ENCODE measurements at regions of chr11 and their contacts with region 1.

Region 1: GRCh38 chr11:27209562-27210005 is 153.4 kb downstream of the CCDC34 start:
- DNase-seq: peak in 2 of 6 donors; percentile 48 to 55
- ATAC-seq: peak; percentile 50 to 85 (median 78)
- H3K4me3 ChIP-seq: no peak overlapping the region
- H3K27ac ChIP-seq: peak overlapping the region in 1 of 4 donors; percentile 32
- H3K4me1 ChIP-seq: peaks cover 6 to 27% (median 10%) of the 10 kb centered on the region in 3 donors
- H3K27me3 ChIP-seq: no peaks in the 10 kb centered on the region
- CTCF ChIP-seq: no peak

Region 2: DNA sequence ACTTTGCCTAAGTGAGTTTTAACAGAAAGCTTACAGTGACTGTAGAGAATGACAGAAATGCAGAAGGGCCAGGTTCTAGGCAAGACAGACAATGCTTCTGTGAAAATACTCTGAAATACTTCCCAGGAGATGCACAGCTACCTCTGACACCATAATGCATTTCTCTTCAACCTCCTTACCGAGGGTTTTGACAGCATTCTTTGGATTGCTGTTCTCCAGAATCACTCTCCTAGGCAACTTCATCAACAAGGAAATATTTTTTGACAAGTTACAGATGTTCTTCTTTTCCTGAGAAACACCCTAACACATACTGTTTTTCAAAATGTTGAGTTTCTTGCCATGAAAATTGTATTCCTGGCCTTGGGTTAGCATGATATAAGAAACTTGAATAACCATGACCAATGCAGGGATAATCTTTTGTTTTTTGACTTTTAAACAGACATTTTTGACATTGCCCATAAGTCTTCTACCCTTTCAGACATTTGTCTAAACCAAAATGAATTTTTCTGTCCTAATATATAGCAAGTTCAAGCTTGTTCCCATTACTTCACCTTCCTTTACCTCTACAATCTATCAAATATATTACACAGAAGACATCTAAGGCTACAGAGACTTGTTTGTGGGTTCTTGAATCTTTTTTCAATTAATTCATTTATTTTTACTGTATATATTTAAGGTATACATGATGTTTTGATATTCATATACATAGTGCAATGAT is 45.3 kb after region 1 on chr11:
- intact Hi-C with region 1: no loop called
- DNase-seq: no peak
- ATAC-seq: no peak
- H3K4me3 ChIP-seq: no peak overlapping the region
- H3K27ac ChIP-seq: no peak overlapping the region
- H3K4me1 ChIP-seq: no peaks in the 10 kb centered on the region
- H3K27me3 ChIP-seq: no peaks in the 10 kb centered on the region
- CTCF ChIP-seq: no peak

Region 3: DNA sequence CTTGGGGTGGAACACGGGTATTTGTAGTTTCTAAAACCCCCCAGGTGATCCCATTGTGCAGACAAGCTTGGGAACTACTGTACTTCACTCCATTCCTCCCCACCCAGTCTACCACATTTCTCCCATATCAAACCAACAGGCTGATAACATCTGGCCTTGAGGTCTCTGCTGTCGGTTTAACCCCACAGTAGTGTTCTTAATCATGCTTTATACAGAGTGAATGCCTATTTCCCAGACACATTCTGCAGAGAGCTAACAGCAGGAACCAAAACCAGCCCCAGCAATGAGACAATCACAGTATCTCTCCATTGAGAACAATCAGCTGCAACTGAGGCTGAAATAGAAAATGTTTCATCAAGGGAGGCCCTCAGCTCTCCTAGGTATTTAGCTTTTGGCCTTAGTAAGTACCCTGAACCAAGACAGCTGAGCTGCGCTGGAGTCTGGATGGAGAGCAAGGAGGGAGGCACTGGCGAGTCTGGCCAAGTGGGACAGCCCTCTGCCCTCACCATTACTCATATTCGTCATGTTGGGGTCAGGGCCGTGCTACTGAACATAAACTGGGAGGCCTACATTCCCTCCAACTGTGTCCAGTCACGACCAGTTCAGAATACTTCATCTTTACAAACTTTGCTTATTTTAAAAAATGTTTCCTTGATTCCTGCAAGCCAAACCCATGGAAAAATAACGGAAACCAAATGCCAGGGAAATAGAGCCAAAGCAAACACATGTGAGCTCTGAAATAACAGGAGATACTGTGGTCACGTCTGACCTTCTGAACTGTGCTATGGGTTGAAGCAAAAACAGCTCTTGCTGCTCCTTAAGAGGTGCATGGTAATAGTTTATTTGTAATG is 72.4 kb after region 1 on chr11:
- intact Hi-C with region 1: loop called in 1 of 3 experiments (anchors 10 kb)
- DNase-seq: no peak
- ATAC-seq: peak in 3 of 4 donors; percentile 56 to 84 (median 74)
- H3K4me3 ChIP-seq: no peak overlapping the region
- H3K27ac ChIP-seq: no peak overlapping the region
- H3K4me1 ChIP-seq: peaks cover 0 to 6% (median 0%) of the 10 kb centered on the region in 3 donors
- H3K27me3 ChIP-seq: no peaks in the 10 kb centered on the region
- CTCF ChIP-seq: no peak

Region 4: GRCh38 chr11:27296497-27296896 is 86.9 kb after region 1 on chr11:
- intact Hi-C with region 1: loop called in 1 of 3 experiments (anchors 10 kb)
- DNase-seq: no peak
- ATAC-seq: peak; percentile 76 to 94 (median 91)
- H3K4me3 ChIP-seq: no peak overlapping the region
- H3K27ac ChIP-seq: no peak overlapping the region
- H3K4me1 ChIP-seq: peaks cover 0 to 10% (median 7%) of the 10 kb centered on the region in 3 donors
- H3K27me3 ChIP-seq: no peaks in the 10 kb centered on the region
- CTCF ChIP-seq: peak; percentile 24 to 62 (median 40)